WTC11 (cell line): ENCODE measurements at regions of chr4 and their contacts with region 1.

Region 1: GRCh38 chr4:153142700-153143438 is 61.4 kb upstream of the TRIM2 start:
- DNase-seq: peak; percentile 73
- ATAC-seq: peak; percentile 65
- H3K4me3 Mint-ChIP-seq: no peak overlapping the region
- H3K27ac Mint-ChIP-seq: no peak overlapping the region
- H3K4me1 Mint-ChIP-seq: peaks cover 36% of the 10 kb centered on the region
- H3K27me3 Mint-ChIP-seq: no peaks in the 10 kb centered on the region
- CTCF ChIP-seq: peak; percentile 56; the same call in 1 of the 2 replicates

Region 2: GRCh38 chr4:153067380-153067779 is 75.5 kb before region 1 on chr4:
- CTCF ChIA-PET with region 1: no interaction called
- POLR2A ChIA-PET with region 1: no interaction called
- DNase-seq: no peak
- ATAC-seq: peak; percentile 47
- H3K4me3 Mint-ChIP-seq: no peak overlapping the region
- H3K27ac Mint-ChIP-seq: peak overlapping the region; percentile 66; the same call in 1 of the 2 replicates
- H3K4me1 Mint-ChIP-seq: peaks cover 34% of the 10 kb centered on the region
- H3K27me3 Mint-ChIP-seq: no peaks in the 10 kb centered on the region
- CTCF ChIP-seq: no peak

Region 3: DNA sequence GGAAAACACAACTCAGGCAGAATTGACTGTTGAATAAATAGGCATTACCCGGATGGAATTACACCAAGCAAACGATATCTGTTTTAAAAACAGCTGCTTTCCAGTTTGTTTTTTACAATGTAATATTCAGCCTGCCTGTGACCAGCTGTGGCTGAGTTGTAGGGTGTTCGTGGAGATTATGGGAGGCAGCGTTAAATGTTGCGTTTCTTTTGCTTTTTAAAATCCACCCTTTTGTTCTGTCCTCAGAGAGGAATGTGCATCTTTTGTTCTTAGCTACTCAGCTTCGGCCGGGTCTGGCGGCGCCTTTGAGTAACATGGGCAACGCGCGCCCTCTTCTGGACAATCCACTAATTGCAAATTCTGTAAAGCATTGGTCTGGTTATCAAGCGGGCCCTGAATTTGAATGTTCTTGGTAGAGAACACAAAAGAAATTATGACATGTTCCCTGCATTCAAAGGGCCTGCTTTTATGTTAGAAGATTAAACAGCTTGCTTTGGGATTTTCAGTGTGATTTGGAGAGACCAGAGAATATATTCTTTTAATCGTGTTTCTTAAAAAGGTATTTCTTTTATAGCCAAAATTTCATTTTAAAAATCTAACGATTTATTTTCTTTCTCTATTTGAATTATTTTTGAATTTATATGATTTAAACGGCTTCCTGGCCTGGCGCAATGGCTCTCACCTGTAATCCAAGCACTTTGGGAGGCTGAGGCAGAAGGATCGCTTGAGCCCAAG is 14.9 kb before region 1 on chr4:
- CTCF ChIA-PET with region 1: interaction called, 33 read pairs
- POLR2A ChIA-PET with region 1: no interaction called
- DNase-seq: peak; percentile 91
- ATAC-seq: peak; percentile 78
- H3K4me3 Mint-ChIP-seq: peak overlapping the region; percentile 47
- H3K27ac Mint-ChIP-seq: peak overlapping the region; percentile 84
- H3K4me1 Mint-ChIP-seq: peaks cover 18% of the 10 kb centered on the region
- H3K27me3 Mint-ChIP-seq: peaks cover 2% of the 10 kb centered on the region; the same call in 1 of the 2 replicates
- CTCF ChIP-seq: peak; percentile 71

Region 4: GRCh38 chr4:153204247-153205027 is 61.6 kb after region 1 on chr4 and contains the start of gene TRIM2:
- CTCF ChIA-PET with region 1: interaction called, 29 read pairs
- POLR2A ChIA-PET with region 1: interaction called, 4 read pairs
- DNase-seq: peak; percentile 74
- ATAC-seq: peak; percentile 65
- H3K4me3 Mint-ChIP-seq: peak within 1 kb of the TSS; percentile 79
- H3K27ac Mint-ChIP-seq: peak within 1 kb of the TSS; percentile 92
- H3K4me1 Mint-ChIP-seq: peaks cover 54% of the 10 kb centered on the region
- H3K27me3 Mint-ChIP-seq: no peaks in the 10 kb centered on the region
- CTCF ChIP-seq: no peak
- total RNA-seq, gene TRIM2: 42.0 to 54.5 TPM (median 43.9 TPM) in 3 replicates

Region 5: GRCh38 chr4:153249199-153250041 is 106.6 kb after region 1 on chr4:
- CTCF ChIA-PET with region 1: interaction called, 17 read pairs
- POLR2A ChIA-PET with region 1: no interaction called
- DNase-seq: peak; percentile 88
- ATAC-seq: peak; percentile 94
- H3K4me3 Mint-ChIP-seq: peak overlapping the region; percentile 82
- H3K27ac Mint-ChIP-seq: peak overlapping the region; percentile 91
- H3K4me1 Mint-ChIP-seq: peaks cover 51% of the 10 kb centered on the region
- H3K27me3 Mint-ChIP-seq: no peaks in the 10 kb centered on the region
- CTCF ChIP-seq: no peak

Region 6: GRCh38 chr4:153318696-153319320 is 175.9 kb after region 1 on chr4:
- CTCF ChIA-PET with region 1: interaction called, 13 read pairs
- POLR2A ChIA-PET with region 1: no interaction called
- DNase-seq: no peak
- ATAC-seq: peak; percentile 76
- H3K4me3 Mint-ChIP-seq: no peak overlapping the region
- H3K27ac Mint-ChIP-seq: peak overlapping the region; percentile 31; the same call in 1 of the 2 replicates
- H3K4me1 Mint-ChIP-seq: no peaks in the 10 kb centered on the region
- H3K27me3 Mint-ChIP-seq: no peaks in the 10 kb centered on the region
- CTCF ChIP-seq: peak; percentile 55

Region 7: GRCh38 chr4:153649572-153649991 is 506.7 kb after region 1 on chr4:
- CTCF ChIA-PET with region 1: interaction called, 10 read pairs
- POLR2A ChIA-PET with region 1: no interaction called
- DNase-seq: peak; percentile 19
- ATAC-seq: no peak
- H3K4me3 Mint-ChIP-seq: no peak overlapping the region
- H3K27ac Mint-ChIP-seq: no peak overlapping the region
- H3K4me1 Mint-ChIP-seq: peaks cover 23% of the 10 kb centered on the region
- H3K27me3 Mint-ChIP-seq: no peaks in the 10 kb centered on the region
- CTCF ChIP-seq: no peak